Gastrocnemius medialis (tissue), 4 donors: ENCODE measurements at regions of chr9 and their contacts with region 1.

Region 1: DNA sequence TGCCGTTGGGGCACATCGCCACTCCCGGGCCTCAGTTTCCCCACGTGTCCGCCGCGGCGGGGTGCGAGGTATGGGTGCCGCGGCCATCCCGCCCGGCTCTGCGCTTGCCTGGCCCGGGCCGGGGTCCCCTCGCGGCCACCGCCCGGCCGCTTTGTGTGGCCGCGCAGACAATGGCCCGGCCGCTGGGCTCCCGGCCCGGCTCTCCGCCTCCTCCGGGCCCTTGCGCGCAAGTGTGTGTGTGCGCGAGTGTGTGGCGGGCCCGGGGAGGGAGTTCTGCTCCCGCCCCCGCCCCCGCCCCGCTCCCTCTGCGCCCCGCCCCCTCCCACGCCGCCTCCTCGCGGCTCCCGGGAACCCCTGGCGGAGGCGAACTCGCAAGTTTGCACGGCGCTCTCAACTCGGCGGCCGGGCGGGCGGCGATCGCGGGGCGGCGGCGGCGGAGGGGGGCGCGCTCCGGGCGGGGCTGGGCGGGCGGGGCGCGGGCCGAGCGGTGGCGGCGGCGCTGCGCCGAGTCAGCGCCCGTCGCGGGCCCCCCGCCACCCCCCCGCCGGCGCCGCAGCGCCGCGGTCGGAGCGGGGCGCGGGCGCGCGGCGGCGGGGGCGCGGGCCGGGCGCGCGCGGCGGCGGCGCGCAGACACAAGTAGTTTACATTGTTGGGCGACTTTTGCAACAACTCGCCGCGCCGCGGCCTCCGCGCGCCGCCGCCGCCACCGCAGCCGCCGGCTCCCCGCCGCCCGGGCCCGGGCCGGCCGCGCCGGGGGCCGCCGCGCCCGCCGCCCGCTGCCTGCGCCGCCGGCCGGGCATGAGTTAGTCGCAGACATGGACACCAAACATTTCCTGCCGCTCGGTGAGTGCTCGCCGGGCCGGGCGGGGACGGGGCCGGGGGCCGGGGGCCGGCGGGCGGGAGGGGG is at the start of gene RXRA:
- DNase-seq: peak; percentile 77 to 87
- ATAC-seq: peak; percentile 27 to 43
- H3K4me3 ChIP-seq: peak within 1 kb of the TSS; percentile 79 to 95 (median 88)
- H3K27ac ChIP-seq: peak within 1 kb of the TSS; percentile 94 to 100 (median 97)
- H3K4me1 ChIP-seq: peaks cover 40 to 46% of the 10 kb centered on the region in 2 donors
- H3K27me3 ChIP-seq: no peaks in the 10 kb centered on the region
- CTCF ChIP-seq: peak in 1 of 5 experiments; percentile 25
- POLR2A ChIP-seq: peak; percentile 93 to 96
- total RNA-seq, gene RXRA: 70.8 to 224 (median 160) TPM

Region 2: DNA sequence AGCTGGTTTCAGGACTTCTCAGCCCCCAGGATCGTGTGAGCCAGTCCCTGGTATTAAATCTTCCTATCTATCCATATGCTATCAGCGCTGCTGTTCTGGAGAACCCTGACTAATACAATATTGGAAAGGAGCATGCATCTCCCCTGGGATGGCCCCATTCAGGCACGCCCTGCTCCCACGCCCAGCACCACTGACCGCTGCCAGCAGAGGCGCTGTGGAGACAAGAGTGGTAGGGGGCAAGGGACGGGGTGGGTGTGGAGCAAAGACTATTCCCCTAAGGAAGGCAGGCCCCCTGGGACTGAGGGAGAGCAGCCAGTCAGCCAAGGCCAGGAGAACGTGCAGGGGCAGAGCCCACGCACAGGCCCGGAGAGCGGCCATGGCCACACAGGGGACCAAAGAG is 449.9 kb before region 1 on chr9:
- in situ Hi-C with region 1: no loop called
- intact Hi-C with region 1: no loop called
- DNase-seq: no peak
- ATAC-seq: no peak
- H3K4me3 ChIP-seq: no peak overlapping the region
- H3K27ac ChIP-seq: no peak overlapping the region
- H3K4me1 ChIP-seq: no peaks in the 10 kb centered on the region
- H3K27me3 ChIP-seq: peaks cover 0 to 3% (median 0%) of the 10 kb centered on the region in 3 donors
- CTCF ChIP-seq: no peak
- POLR2A ChIP-seq: no peak

Region 3: GRCh38 chr9:134067904-134068743 is 257.9 kb before region 1 on chr9 and contains the start of gene BRD3:
- in situ Hi-C with region 1: no loop called
- intact Hi-C with region 1: loop called (anchors 5 kb)
- DNase-seq: peak; percentile 74 to 84
- ATAC-seq: peak; percentile 80 to 84
- H3K4me3 ChIP-seq: peak within 1 kb of the TSS; percentile 60 to 89 (median 78)
- H3K27ac ChIP-seq: peak within 1 kb of the TSS; percentile 89 to 99 (median 98)
- H3K4me1 ChIP-seq: peaks cover 36 to 39% of the 10 kb centered on the region in 2 donors
- H3K27me3 ChIP-seq: no peaks in the 10 kb centered on the region
- CTCF ChIP-seq: no peak
- POLR2A ChIP-seq: peak; percentile 89 to 93
- total RNA-seq, gene BRD3: 10.8 to 21.5 (median 16.5) TPM

Region 4: DNA sequence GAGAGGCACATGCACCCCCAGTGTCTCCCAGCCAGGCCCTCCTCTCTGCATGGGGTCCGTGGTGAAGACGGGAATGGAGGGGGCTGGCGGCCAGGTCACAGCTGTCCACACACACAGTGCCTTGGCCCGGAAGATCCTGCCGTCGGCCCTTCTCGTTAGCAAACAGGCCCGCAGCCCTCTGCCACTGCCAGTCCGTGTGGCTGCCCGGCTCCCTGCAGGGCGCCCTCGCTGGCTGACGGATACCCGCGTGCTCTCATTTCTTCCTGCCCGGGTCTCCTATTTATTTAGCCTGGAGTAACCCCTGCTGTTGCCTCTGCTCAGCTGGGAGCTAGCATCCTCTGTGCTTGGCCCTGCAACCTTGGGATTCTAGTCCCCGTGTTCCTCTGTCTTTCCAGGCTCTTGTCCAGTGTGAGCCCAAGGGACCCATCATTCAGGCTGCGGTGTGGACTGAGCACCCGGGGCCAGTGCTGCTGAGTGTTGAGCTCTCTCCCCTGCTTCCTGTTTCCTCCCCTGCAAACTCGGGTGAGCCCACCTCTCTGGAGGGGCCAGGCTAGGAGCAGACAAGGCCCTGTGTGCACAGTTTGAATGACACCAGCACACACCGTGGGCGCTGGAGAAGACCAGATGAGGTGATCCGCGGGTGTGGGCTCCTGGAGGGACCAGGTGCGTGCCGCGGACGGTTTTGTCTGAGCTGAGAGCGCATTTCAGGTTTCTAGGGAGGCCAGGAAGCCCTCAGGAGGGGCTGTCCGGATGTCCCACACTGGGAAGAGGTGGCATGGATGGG is 147.1 kb before region 1 on chr9:
- in situ Hi-C with region 1: loop called in 1 of 4 experiments (anchors 25 kb)
- intact Hi-C with region 1: no loop called
- DNase-seq: peak in 1 of 2 donors; percentile 61
- ATAC-seq: peak; percentile 45 to 66
- H3K4me3 ChIP-seq: no peak overlapping the region
- H3K27ac ChIP-seq: peak overlapping the region in 3 of 4 donors; percentile 4 to 42 (median 25)
- H3K4me1 ChIP-seq: peaks cover 22 to 30% of the 10 kb centered on the region in 2 donors
- H3K27me3 ChIP-seq: no peaks in the 10 kb centered on the region
- CTCF ChIP-seq: no peak
- POLR2A ChIP-seq: no peak

Region 5: DNA sequence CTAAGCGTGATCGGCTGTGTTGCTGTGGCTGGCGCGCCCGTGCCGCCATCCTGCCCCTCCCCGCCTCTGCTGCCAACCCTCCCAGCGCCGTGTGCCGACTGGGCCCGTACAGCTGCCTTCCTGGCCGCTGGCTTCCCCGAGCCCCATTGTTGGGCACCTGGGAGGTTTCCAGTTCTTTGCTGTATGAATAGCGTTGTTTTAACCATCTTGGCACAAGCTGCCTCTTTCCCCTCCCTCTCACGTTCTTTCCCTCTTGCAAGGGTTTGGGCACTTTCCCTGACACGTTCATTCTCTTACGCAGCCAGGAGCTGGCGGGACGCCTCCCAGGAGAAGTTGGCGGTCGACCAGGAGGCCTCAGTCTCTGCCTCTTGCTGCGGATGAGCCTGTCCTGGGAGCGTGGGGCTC is 43.0 kb before region 1 on chr9:
- in situ Hi-C with region 1: no loop called
- intact Hi-C with region 1: loop called (anchors 5 kb)
- DNase-seq: peak; percentile 53 to 79
- ATAC-seq: peak; percentile 67 to 68
- H3K4me3 ChIP-seq: peak overlapping the region in 1 of 4 donors; percentile 6
- H3K27ac ChIP-seq: peak overlapping the region; percentile 67 to 80 (median 72)
- H3K4me1 ChIP-seq: peaks cover 19 to 31% of the 10 kb centered on the region in 2 donors
- H3K27me3 ChIP-seq: no peaks in the 10 kb centered on the region
- CTCF ChIP-seq: no peak
- POLR2A ChIP-seq: no peak

Region 6: GRCh38 chr9:134375430-134376385 is 49.6 kb after region 1 on chr9:
- in situ Hi-C with region 1: no loop called
- intact Hi-C with region 1: loop called (anchors 1 kb)
- DNase-seq: peak; percentile 85 to 96
- ATAC-seq: peak; percentile 31 to 34
- H3K4me3 ChIP-seq: peak overlapping the region; percentile 35 to 56 (median 47)
- H3K27ac ChIP-seq: peak overlapping the region; percentile 90 to 100 (median 100)
- H3K4me1 ChIP-seq: peaks cover 97 to 100% of the 10 kb centered on the region in 2 donors
- H3K27me3 ChIP-seq: no peaks in the 10 kb centered on the region
- CTCF ChIP-seq: peak in 2 of 5 experiments; percentile 28 to 36
- POLR2A ChIP-seq: peak in 1 of 2 donors; percentile 74

Region 7: DNA sequence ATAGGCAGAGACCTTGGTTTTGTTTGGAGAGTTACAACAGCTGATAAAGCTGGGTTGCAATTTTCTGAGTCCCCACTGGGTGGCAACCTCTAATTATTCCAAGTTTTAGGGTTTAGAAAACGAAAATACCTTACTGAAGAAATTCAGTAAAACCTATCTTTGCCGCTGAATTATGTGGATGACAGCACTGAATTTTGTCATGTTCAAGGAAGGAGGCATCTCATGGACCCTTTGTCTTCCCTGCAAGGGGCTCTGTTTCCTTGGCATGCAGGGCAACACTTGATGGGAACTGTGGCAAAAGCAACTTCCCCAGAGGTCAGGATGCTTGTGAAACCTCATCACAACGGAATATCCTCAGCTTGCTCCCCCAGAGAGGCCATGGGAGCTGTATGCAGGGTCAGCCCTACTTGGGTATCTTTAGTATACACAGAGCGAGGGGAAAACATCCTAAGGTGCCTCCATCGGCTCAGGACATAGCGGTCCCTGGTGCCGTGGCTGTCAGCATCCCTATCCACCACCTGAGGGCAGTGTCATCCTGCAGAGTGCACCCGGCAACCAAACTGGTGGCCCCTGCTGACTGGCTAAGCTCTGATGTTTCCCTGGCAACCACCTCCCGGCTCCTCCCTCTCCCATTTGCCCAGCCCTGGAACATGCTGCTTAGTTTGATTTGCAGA is 123.3 kb after region 1 on chr9:
- in situ Hi-C with region 1: loop called in 2 of 4 experiments (anchors 10 to 25 kb)
- intact Hi-C with region 1: no loop called
- DNase-seq: peak; percentile 83 to 87
- ATAC-seq: peak; percentile 84 to 85
- H3K4me3 ChIP-seq: no peak overlapping the region
- H3K27ac ChIP-seq: no peak overlapping the region
- H3K4me1 ChIP-seq: no peaks in the 10 kb centered on the region
- H3K27me3 ChIP-seq: no peaks in the 10 kb centered on the region
- CTCF ChIP-seq: peak; percentile 60 to 87 (median 84)
- POLR2A ChIP-seq: no peak